ENCODE measurements at regions of chr14 and their contacts with region 1.

Region 1: DNA sequence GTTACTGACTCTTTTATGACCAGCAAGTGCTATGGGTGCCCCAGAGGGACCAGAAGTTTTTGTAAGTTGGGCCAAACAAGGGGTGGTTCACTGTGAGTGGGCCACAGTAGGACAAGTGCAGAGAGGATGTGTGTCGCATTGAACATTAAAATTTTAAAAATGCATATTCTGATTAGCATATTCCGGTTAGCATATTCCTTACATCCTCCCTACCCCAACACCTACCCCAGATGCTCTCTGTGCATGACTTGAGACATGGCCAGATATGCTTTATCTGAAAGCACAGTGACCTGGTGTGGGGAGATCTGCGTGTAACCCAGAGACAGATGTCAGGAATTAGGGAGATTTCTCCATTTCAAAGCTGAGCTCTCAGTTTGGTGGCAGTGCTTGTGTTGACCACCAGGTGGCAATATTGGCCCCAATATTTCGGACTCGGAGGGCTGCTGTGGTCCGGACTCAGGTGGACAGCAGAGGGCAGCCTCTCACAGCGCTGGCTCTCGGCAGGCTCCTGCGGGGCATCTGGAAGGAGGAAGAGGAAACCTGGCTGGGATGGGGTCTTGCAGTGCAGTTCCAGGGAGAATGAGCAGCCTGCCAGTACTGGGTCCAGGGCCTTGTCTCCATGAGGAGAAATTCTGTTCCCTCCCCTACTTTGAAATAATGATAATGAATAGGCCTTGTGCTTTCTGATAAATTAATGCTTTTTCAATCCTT is 1.6 kb upstream of the CEBPE start:
- DNase-seq: peak; percentile 94
- ATAC-seq: peak; percentile 79
- H3K4me3 Mint-ChIP-seq: no peak overlapping the region
- H3K27ac Mint-ChIP-seq: peak overlapping the region; percentile 30; the same call in 1 of the 2 replicates
- H3K4me1 Mint-ChIP-seq: peaks cover 61% of the 10 kb centered on the region
- H3K27me3 Mint-ChIP-seq: peaks cover 4% of the 10 kb centered on the region; the same call in 1 of the 2 replicates
- CTCF ChIP-seq: peak; percentile 98

Region 2: DNA sequence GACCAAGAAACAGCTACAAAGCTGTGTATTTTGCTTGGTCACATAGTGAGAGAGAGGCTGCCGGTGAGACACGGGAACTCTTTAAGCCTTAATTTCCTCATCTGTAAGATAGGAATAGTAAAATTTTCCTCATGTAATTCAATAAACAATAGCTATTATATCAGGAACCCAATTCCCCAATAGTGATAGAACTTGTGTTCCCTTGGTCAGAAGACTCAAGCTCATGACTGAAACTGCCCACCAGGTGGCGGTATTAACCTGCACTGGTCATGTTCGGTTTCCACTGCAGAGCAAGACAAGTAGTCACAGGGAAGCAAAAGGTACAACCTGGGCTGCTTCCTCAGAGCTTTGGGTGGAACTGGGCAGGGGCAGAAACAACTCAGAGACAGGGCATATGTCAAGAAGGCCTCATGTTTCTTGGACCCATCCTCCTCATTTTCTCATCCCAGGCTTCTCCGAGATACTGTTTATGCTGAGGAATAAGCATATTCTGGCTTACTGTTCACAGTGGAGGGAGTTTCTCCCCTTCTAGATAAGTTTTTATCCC is 134.1 kb before region 1 on chr14:
- CTCF ChIA-PET with region 1: interaction called, 18 read pairs
- POLR2A ChIA-PET with region 1: no interaction called
- DNase-seq: peak; percentile 95
- ATAC-seq: peak; percentile 57
- H3K4me3 Mint-ChIP-seq: no peak overlapping the region
- H3K27ac Mint-ChIP-seq: no peak overlapping the region
- H3K4me1 Mint-ChIP-seq: peaks cover 5% of the 10 kb centered on the region
- H3K27me3 Mint-ChIP-seq: no peaks in the 10 kb centered on the region; the same call in 1 of the 2 replicates
- CTCF ChIP-seq: peak; percentile 83

Region 3: DNA sequence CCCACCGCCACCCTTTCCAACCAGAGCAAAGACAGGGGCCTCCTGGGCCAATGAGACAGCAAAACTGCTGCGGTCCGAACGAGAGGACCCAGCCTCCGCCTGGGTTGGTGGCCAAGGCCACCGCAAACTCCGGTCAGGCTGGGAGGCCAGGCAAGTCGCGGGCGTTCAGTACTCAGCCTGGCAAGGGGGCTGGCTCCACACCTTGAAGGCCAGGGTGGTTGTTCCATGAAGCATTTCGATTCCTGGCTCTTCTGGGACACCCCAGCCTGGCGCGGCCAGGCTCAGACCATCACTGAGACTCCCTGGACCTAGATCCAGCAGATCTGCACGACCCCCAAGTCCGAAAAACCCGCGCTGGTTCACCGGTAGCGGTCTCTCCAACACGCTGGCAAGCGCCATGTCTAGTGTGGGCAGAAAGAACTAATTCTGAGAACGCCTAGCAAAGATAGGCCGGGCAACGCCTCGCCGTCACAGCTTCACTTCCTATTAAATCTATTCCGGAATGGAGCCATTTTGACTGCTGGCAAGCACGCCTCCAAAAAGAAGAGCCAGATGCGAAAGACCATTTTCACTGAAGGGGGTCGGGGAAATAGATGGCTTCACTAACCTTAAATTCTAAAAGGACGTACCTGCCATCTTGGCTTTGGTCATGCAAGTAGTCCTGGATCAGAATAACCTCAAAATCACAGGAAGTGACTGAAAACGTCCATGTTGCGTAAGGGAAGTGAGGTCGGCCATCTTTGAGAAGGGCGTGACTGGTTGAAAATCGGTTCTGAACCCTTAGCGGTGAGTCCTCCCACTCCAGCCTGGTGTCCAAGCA is 86.0 kb before region 1 on chr14 and contains the start of gene PSMB5:
- CTCF ChIA-PET with region 1: no interaction called
- POLR2A ChIA-PET with region 1: no interaction called
- DNase-seq: peak; percentile 84
- ATAC-seq: peak; percentile 94
- H3K4me3 Mint-ChIP-seq: peak within 1 kb of the TSS; percentile 96
- H3K27ac Mint-ChIP-seq: peak within 1 kb of the TSS; percentile 100
- H3K4me1 Mint-ChIP-seq: peaks cover 14% of the 10 kb centered on the region
- H3K27me3 Mint-ChIP-seq: no peaks in the 10 kb centered on the region
- CTCF ChIP-seq: no peak
- total RNA-seq, gene PSMB5: 200 to 224 TPM (median 203 TPM) in 3 replicates

Region 4: GRCh38 chr14:23104591-23105347 is 15.9 kb before region 1 on chr14 and contains the start of gene CIROP:
- CTCF ChIA-PET with region 1: interaction called, 43 read pairs
- POLR2A ChIA-PET with region 1: no interaction called
- DNase-seq: no peak
- ATAC-seq: peak; percentile 43
- H3K4me3 Mint-ChIP-seq: peak within 1 kb of the TSS; percentile 18
- H3K27ac Mint-ChIP-seq: no peak within 1 kb of the TSS; the same call in none of the 2 replicates
- H3K4me1 Mint-ChIP-seq: peaks cover 46% of the 10 kb centered on the region
- H3K27me3 Mint-ChIP-seq: peaks cover 17% of the 10 kb centered on the region
- CTCF ChIP-seq: no peak
- total RNA-seq, gene CIROP: 0.07 to 0.11 TPM in 2 of 3 replicates, not detected in the other

Region 5: DNA sequence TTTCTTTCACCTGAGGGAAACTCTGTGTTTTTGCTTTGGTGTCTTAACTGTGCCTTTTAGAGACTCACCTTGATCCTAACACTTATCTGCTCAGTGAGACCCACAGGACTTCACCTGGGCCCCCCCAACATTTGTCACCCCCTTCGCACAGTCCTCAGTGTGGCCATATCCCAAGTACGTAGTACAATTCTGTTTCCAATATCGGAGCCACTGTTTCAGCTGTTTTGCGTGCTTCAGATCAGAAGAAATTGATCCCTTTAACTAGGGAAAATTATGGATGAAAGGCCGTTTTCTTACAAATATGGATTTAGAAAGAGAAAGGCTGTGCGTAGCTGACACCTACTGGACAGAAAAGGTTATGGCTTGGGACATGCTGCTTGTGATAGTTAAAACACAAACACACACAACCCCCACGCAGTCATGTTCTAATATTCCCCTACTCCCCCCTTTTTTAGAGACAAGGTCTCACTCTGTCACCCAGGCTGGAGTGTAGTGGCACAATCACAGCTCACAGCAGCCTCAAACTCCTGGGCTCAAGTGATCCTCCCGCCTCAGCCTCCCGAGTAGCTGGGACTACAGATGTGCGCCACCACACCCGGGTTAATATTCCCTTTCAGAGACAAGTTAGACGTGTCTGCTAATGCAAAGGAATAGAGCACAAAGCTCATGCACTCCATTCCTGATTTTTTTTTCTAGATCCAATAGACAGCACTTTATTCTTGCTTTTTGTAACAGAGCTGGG is 66.4 kb after region 1 on chr14:
- CTCF ChIA-PET with region 1: interaction called, 372 read pairs
- POLR2A ChIA-PET with region 1: interaction called, 4 read pairs
- DNase-seq: no peak
- ATAC-seq: peak; percentile 12; the same call in 1 of the 2 replicates
- H3K4me3 Mint-ChIP-seq: no peak overlapping the region
- H3K27ac Mint-ChIP-seq: peak overlapping the region; percentile 64; the same call in 1 of the 2 replicates
- H3K4me1 Mint-ChIP-seq: peaks cover 27% of the 10 kb centered on the region
- H3K27me3 Mint-ChIP-seq: no peaks in the 10 kb centered on the region
- CTCF ChIP-seq: peak; percentile 53; the same call in 1 of the 2 replicates

Region 6: DNA sequence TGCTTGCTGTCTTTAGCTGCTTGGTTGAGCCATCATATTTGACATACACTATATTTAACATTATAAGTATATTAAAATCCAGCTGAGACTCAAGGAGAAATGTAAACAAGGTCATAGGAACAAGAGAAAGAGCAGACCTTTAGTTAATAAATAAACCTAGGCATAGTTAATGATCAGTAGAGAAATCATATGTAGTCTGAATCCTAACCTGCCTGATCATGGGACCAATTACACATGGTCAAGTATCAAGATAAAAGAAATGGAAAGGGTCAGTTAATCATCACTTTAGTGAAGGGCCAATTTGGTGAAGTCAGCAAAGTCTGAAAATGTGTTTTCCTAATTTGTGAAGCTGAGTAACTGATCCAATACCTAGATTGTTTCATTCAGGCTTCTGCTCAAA is 124.6 kb after region 1 on chr14:
- CTCF ChIA-PET with region 1: interaction called, 10 read pairs
- POLR2A ChIA-PET with region 1: no interaction called
- DNase-seq: no peak
- ATAC-seq: no peak
- H3K4me3 Mint-ChIP-seq: no peak overlapping the region
- H3K27ac Mint-ChIP-seq: no peak overlapping the region
- H3K4me1 Mint-ChIP-seq: peaks cover 5% of the 10 kb centered on the region
- H3K27me3 Mint-ChIP-seq: no peaks in the 10 kb centered on the region
- CTCF ChIP-seq: no peak

Region 7: DNA sequence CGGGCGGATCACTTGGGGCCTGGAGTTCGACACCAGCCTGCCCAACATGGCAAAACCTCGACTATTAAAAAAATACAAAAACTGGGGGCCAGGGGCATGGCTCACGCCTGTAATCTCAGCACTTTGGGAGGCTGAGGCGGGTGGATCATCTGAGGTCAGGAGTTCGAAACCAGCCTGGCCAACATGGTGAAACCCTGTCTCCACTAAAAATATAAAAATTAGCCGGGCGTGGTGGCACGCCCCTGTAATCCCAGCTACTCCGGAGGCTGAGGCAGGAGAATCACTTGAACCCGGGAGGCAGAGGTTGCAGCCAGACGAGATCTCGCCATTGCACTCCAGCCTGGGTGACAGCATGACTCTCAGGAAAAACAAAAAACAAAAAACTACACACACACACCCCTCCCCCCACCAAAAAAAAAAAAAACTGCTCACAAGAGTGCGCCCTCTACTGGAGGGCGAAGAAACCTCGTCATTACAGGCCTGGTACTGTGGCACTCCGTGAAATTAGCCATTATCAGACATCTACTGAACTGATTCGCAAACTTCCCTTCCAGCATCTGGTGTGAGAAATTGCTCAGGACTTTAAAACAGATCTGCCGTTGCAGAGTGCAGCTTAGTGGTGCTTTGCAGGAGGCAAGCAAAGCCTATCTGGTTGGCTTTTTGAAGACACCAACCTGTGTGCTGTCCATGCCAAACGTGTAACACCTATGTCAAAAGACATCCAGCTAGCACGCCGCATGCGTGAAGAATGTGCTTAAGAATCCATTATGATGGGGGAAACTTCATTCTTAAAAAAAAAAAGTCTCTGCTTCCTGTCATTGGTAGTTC is 174.3 kb after region 1 on chr14:
- CTCF ChIA-PET with region 1: interaction called, 16 read pairs
- POLR2A ChIA-PET with region 1: no interaction called
- DNase-seq: peak; percentile 28
- ATAC-seq: peak; percentile 55
- H3K4me3 Mint-ChIP-seq: no peak overlapping the region
- H3K27ac Mint-ChIP-seq: no peak overlapping the region
- H3K4me1 Mint-ChIP-seq: peaks cover 20% of the 10 kb centered on the region
- H3K27me3 Mint-ChIP-seq: peaks cover 99% of the 10 kb centered on the region
- CTCF ChIP-seq: peak; percentile 90

Region 8: DNA sequence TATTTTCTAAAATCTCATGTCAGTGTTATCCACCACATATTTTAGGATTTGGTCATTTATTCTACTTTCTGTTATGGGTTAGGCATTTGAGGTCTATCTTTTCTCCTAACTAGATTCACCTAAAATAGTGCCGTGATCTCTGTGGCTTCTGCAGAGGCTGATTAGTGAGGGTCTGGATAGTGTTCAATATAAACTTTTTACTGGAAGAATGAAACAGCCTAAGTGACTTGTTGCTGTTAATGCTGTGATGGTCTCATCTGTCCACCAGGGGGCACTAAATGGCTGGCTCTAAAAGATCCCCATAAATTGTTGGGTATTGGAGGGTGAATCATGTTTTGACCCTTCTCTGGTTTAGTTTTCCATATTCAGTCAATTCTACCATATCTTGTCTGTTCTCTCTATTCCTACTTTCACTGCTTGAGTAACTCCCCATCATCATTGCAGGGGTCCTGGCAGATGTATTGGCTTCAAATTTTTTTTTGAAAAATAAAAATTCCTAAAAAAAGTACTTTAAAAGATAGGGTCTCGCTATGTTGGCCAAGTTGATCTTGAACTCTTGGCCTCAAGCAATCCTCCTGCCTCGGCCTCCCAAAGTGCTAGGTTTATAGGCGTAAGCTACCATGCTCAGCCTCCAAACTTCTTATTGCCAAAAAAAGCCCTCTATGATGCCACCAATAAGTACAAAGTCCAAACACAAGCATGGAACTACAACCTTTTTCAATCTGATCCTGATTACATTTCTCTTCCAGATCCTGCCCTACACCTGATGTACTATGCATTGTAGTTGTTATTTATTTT is 207.4 kb after region 1 on chr14:
- CTCF ChIA-PET with region 1: interaction called, 12 read pairs
- POLR2A ChIA-PET with region 1: no interaction called
- DNase-seq: peak; percentile 72
- ATAC-seq: peak; percentile 70
- H3K4me3 Mint-ChIP-seq: no peak overlapping the region
- H3K27ac Mint-ChIP-seq: no peak overlapping the region
- H3K4me1 Mint-ChIP-seq: peaks cover 3% of the 10 kb centered on the region
- H3K27me3 Mint-ChIP-seq: no peaks in the 10 kb centered on the region; the same call in 1 of the 2 replicates
- CTCF ChIP-seq: peak; percentile 76